CD14-positive monocyte (primary cell): ENCODE measurements at regions of chr9 and their contacts with region 1.

Region 1: DNA sequence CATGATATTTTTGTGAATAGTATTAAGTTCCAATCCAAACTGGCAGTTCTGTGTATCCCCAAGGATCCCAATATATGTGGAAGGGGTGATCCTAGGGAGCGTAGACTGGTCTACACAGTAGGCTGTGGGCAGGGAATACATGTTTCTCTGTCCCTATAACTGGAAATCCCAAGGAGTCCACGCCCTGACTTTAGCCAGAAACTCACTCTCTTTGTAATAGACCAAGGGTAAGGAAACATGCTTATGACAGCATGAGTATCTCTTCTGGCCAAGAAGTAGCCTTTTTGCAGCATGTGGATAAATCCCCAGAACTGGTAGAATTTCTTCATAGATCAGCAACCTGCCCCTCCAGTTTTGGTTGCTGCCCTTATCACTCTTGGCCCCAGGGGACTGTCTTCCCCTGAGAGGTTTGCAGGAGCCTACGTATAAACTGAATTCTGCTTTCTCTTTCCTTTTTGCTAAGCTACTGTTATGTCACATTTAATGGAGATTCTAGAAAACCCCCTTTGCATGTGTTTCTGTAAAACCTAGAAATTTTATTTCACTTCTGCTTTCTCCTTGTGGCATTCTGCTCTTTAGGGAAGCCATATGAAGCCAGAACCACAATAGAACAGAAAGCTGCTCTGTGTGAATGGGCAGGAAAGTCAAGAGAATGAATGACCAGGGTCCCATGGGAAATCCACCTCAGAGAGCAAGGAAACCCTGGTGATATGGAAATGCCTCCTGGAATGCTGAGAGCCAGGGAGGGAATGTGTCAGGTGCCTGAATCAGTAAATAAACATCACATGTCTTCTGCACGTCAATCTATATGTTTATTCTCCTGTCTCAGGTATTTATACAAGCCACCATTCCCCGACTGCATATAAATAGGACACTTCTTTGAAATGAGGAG is 3.5 kb downstream of the IFNA2 start:
- DNase-seq: peak; percentile 60 to 81 (median 75)
- H3K4me3 ChIP-seq: peak overlapping the region; percentile 18 to 70 (median 57)
- H3K4me3 Mint-ChIP-seq: peak overlapping the region; percentile 69 to 78
- H3K27ac ChIP-seq: no peak overlapping the region
- H3K27ac Mint-ChIP-seq: peak overlapping the region in 5 of 7 donors; percentile 30 to 77 (median 50)
- H3K4me1 ChIP-seq: peaks cover 27 to 33% of the 10 kb centered on the region in 2 donors
- H3K4me1 Mint-ChIP-seq: peaks cover 36% of the 10 kb centered on the region
- H3K27me3 ChIP-seq: peaks cover 55 to 72% of the 10 kb centered on the region in 2 donors
- H3K27me3 Mint-ChIP-seq: peaks cover 40 to 61% (median 46%) of the 10 kb centered on the region in 3 donors
- CTCF ChIP-seq: no peak

Region 2: DNA sequence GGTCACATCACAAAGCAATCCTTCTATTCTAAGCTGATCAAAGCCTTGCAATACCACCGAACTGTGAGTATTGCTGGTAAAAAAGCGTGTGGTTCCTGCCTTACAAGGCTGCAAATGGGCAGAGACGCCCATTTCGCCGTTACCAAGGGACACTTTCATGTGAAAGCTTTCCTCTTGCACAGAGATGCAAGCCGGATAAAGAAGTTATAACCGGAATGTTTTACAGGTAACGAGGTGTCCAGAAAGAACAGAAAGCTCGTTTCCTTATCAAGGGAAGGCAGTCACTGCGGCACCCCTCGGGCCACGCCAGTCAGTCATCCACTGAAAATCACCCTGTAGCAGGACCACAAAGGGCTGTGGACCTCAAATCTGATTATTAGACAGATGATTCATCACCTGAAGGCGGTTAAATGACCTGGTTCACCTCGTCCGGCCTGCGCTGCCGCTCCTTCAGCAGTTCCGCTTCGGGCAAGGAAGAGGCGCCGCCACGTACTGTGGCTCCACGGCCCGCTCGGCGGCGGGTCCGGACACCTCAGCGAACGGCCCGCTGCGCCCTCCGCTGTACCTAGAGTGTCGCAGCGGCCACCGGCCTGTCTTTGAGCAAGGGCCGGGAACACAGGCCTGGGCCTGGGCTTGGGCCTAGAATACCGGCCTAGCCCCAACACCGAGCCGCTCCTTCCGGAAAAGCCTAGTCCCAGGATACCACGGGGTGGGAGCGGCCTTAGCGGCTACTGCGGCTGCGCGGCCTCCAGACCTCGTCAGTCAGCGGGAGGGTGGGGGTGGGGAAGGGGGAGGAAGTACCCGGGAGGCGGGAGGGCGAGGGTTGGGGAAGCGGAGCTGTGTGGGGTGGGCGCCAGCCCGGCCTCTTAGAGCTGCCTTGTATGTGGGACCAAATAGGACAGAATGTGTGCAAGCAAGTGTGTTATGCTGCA is 46.7 kb before region 1 on chr9 and contains the start of gene KLHL9:
- intact Hi-C with region 1: loop called in 1 of 2 experiments (anchors 10 kb)
- DNase-seq: peak; percentile 85 to 88 (median 86)
- H3K4me3 ChIP-seq: peak within 1 kb of the TSS; percentile 76 to 97 (median 94)
- H3K4me3 Mint-ChIP-seq: peak within 1 kb of the TSS; percentile 85 to 91
- H3K27ac ChIP-seq: peak within 1 kb of the TSS; percentile 91 to 98
- H3K27ac Mint-ChIP-seq: peak within 1 kb of the TSS; percentile 88 to 95 (median 93)
- H3K4me1 ChIP-seq: peaks cover 22 to 39% of the 10 kb centered on the region in 2 donors
- H3K4me1 Mint-ChIP-seq: peaks cover 47% of the 10 kb centered on the region
- H3K27me3 ChIP-seq: no peaks in the 10 kb centered on the region
- H3K27me3 Mint-ChIP-seq: peaks cover 0 to 8% (median 6%) of the 10 kb centered on the region in 3 donors
- CTCF ChIP-seq: no peak
- polyA plus RNA-seq, gene KLHL9: 2.8 to 9.0 (median 7.7) TPM

Region 3: DNA sequence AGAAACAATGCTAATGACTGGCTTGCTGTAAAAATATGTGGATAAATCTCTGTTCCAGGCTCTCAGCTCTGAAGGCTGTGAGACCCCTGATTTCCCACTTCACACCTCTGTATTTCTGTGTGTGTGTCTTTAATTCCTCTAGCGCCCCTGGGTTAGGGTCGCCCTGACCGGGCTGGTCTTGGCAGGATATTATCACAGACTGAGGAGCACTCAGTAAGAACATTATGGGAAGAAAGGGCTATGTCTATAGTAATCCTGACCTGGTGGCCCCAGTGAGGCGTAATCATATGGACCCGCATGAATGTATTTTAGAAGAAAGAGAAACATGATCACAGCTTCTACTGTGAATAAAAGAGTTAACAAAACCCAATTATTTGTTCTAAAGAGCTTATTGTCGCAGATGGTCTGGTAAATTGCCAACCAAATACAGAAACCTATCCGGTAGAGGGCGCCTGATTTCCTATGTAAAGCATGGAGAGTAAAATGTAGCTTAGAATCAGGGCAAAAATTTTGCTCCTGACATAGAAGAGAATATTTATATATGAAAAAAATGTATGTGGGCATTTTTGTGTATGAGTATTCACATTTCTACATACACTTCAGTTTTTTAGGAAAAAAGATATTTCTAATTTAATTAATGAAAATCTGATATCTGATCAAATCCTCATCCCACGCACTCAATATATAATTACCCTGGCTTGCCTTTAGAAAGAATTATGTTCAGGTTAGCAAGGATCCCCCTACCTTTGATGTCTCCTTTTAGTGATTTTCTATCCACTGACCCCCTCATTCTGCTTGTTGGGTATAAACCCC is 52.7 kb after region 1 on chr9:
- intact Hi-C with region 1: no loop called
- DNase-seq: peak; percentile 21 to 50 (median 46)
- H3K4me3 ChIP-seq: no peak overlapping the region
- H3K4me3 Mint-ChIP-seq: no peak overlapping the region
- H3K27ac ChIP-seq: no peak overlapping the region
- H3K27ac Mint-ChIP-seq: no peak overlapping the region
- H3K4me1 ChIP-seq: peaks cover 5 to 13% of the 10 kb centered on the region in 2 donors
- H3K4me1 Mint-ChIP-seq: peaks cover 14% of the 10 kb centered on the region
- H3K27me3 ChIP-seq: peaks cover 11 to 20% of the 10 kb centered on the region in 2 donors
- H3K27me3 Mint-ChIP-seq: peaks cover 13 to 22% (median 14%) of the 10 kb centered on the region in 3 donors
- CTCF ChIP-seq: peak; percentile 69